HAP-1 (cell line): ENCODE measurements at regions of chr11 and their contacts with region 1.

Region 1: GRCh38 chr11:44621140-44621681 is 55.7 kb downstream of the CD82 start:
- DNase-seq: peak; percentile 51 to 88
- H3K4me3 ChIP-seq: no peak overlapping the region
- H3K4me1 ChIP-seq: no peaks in the 10 kb centered on the region
- H3K27me3 ChIP-seq: no peaks in the 10 kb centered on the region

Region 2: DNA sequence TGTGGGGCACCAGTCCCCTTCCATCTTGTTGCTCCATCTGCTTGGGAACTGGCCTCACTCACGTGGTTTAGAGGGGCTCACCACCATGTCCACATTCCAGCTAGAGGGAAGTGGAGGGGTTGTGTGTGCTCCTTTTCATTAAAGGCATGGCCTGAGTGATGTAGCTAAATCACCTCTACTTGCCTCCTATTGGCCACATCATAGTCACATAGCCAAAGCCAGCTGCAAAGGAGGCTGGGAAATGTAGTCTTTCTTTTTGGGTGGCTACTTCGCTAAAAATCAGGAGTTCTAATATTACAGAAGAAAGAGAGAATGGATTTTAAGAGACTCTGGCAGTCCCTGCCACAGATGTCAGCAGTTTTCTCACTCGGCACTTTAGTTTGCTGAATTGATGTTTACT is 248.2 kb before region 1 on chr11:
- in situ Hi-C with region 1: no loop called
- DNase-seq: no peak
- H3K4me3 ChIP-seq: no peak overlapping the region
- H3K4me1 ChIP-seq: no peaks in the 10 kb centered on the region
- H3K27me3 ChIP-seq: no peaks in the 10 kb centered on the region

Region 3: GRCh38 chr11:44556735-44557409 is 64.3 kb before region 1 on chr11:
- in situ Hi-C with region 1: loop called (anchors 5 kb)
- DNase-seq: peak; percentile 18 to 69
- H3K4me3 ChIP-seq: no peak overlapping the region
- H3K4me1 ChIP-seq: 0 out of 2 replicates have a peak, but pooled peaks cover 3% of the 10 kb centered on the region
- H3K27me3 ChIP-seq: no peaks in the 10 kb centered on the region